PC-9 (cell line): ENCODE measurements at regions of chr2 and their contacts with region 1.

Region 1: DNA sequence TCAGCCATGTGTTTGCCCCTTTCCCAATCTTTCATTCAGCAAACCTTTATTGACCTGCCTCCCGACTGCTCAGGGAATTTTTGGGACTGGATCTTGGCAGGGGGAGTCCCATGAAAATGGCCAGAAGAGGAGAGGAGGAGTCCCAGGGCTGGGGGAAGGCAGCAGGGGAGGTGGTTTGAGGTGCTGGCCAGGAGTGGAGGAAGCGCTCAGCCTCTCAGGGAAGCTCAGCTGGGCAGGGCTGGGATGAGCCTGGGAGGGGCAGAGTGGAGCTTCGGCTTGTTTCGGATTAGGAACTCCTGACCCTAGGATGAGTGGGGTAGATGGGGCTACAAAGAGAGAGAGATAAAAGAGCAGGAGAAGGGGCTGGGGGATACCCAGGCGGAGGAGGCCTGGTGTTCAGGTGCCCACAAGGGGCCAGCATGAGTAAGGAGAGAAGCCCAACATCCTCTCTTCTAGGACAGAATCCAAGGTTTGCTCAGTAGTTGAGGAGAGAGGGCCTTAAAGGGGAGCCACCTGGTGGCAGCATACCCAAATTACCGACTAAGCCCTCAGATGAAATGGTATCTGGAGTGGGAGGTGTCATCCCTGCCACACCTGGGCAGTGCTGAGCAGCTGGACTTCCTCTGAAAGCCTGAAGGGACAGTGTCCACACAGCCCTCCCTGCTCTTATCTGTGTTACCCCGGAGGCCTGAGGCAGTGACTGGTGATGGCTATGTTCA is 91.1 kb downstream of the INHBB start:
- DNase-seq: peak; percentile 56 to 77
- H3K4me3 ChIP-seq: no peak overlapping the region
- H3K27ac ChIP-seq: no peak overlapping the region
- H3K4me1 ChIP-seq: peaks cover 22% of the 10 kb centered on the region
- H3K27me3 ChIP-seq: no peaks in the 10 kb centered on the region
- CTCF ChIP-seq: peak; percentile 84

Region 2: GRCh38 chr2:120403261-120404020 is 33.6 kb before region 1 on chr2:
- CTCF ChIA-PET with region 1: no interaction called
- POLR2A ChIA-PET with region 1: interaction called, 3 read pairs
- intact Hi-C with region 1: loop called (anchors 1 kb)
- DNase-seq: peak; percentile 91 to 99
- H3K4me3 ChIP-seq: no peak overlapping the region
- H3K27ac ChIP-seq: peak overlapping the region; percentile 86
- H3K4me1 ChIP-seq: peaks cover 68% of the 10 kb centered on the region
- H3K27me3 ChIP-seq: no peaks in the 10 kb centered on the region
- CTCF ChIP-seq: no peak

Region 3: DNA sequence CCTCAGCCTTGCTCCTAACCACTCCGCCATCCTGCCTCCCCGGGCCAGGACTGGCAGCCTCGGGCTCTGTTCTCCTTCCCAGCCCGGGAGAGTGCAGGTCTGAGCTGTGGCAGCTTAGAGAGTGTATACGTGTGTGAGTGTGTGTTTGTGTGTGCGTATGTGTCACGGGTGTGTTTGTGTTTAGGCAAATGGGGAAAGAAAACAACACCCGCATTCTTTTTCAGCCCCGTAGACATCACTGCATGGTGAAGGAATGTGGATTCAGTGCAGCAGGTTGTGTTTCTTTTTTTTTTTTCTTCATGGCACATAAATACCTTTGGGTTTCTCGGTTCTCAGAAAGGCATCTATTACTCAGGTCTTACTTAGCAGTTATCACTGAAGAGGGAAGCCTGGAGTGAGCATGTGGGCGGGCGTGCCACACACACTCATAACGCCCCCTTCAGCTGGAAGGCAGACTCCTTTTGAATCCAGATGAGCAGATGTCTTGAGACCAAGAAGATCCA is 342.8 kb after region 1 on chr2:
- CTCF ChIA-PET with region 1: no interaction called
- POLR2A ChIA-PET with region 1: no interaction called
- intact Hi-C with region 1: no loop called
- DNase-seq: peak; percentile 58 to 60
- H3K4me3 ChIP-seq: no peak overlapping the region
- H3K27ac ChIP-seq: no peak overlapping the region
- H3K4me1 ChIP-seq: no peaks in the 10 kb centered on the region
- H3K27me3 ChIP-seq: peaks cover 31% of the 10 kb centered on the region
- CTCF ChIP-seq: no peak; the same call in 1 of the 2 replicates